ENCODE measurements at regions of chr5 and their contacts with region 1.

Region 1: GRCh38 chr5:164013077-164013670 is 507.8 kb downstream of the MAT2B start:
- DNase-seq: no peak
- H3K4me3 Mint-ChIP-seq: no peak overlapping the region
- H3K27ac Mint-ChIP-seq: no peak overlapping the region
- H3K4me1 Mint-ChIP-seq: peaks cover 3% of the 10 kb centered on the region
- H3K27me3 Mint-ChIP-seq: no peaks in the 10 kb centered on the region

Region 2: DNA sequence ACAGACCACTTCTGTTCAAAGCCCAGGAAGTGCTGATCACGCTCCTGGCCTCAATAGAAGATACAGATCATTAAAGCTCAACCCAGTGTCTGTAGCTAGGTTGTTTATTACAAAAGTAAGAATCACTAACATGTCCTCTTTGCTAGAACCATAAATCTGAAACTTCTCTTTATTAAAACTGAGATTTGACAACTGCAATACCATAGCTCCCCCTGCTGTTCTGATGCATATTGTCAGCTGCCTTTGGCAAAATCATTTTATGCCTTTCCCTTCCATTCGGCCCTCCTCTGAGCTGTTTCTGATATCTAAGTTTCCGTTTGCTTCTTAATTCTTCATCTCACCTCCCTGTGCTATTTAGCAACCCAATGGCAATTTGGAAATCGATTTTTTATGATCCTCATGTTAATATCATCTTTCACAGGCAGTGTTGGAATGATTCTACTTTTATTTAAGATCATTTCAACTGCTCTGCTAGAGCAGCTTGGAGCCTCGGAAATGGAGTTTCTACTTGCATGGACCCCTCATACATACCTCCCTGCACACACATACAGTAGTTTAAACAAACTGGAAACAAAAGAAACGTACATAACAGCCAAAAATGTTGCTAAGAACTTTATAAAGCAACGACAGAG is 491.1 kb after region 1 on chr5:
- intact Hi-C with region 1: loop called (anchors 1 kb)
- DNase-seq: no peak
- H3K4me3 Mint-ChIP-seq: no peak overlapping the region
- H3K27ac Mint-ChIP-seq: no peak overlapping the region
- H3K4me1 Mint-ChIP-seq: no peaks in the 10 kb centered on the region
- H3K27me3 Mint-ChIP-seq: no peaks in the 10 kb centered on the region

Region 3: DNA sequence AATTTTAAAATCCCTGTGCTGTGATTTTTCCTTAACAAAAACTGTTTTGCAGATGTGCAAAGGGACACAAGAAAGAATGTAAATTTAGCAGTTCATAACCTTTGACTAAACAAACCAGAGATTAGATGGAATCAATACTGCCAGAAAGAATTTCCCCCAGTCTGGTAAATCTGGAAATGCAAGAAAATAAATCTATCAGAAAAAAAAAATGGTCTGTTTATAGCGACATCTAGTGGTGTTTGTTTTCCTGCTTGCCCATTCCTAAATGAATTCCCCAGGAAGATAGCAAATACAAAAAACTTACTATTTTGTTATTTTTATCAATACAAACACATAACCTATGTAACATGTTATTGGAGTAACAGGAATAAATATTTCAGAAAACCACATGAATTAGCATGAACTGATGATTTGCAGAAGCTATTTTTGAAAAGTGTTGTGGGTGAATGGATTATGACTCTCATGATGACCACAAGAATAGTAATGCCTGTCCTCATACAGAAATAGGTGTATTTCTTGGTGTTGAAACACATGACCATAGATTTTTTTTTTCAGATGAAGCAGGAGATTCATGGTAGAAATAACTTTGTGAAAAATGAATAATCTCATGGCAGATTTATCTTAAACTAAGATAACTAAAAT is 1196.0 kb after region 1 on chr5:
- intact Hi-C with region 1: loop called (anchors 2 kb)
- DNase-seq: no peak
- H3K4me3 Mint-ChIP-seq: no peak overlapping the region
- H3K27ac Mint-ChIP-seq: no peak overlapping the region
- H3K4me1 Mint-ChIP-seq: no peaks in the 10 kb centered on the region
- H3K27me3 Mint-ChIP-seq: no peaks in the 10 kb centered on the region

Measured in activated T-helper 2 cell treated with anti-CD3 and anti-CD28 coated beads, Interferon-gamma antibody, Interleukin-2, Interleukin-4, amounts not matched to agents 10 μg/mL and 5 μg/mL and 100 μg/mL, durations not matched to agents 14 hours and 24 hours and 36 hours (primary cell).